ENCODE measurements at regions of chr15 and their contacts with region 1.

Region 1: GRCh38 chr15:90387537-90388461 is at the start of gene IQGAP1:
- DNase-seq: peak; percentile 99
- CTCF ChIP-seq: no peak

Region 2: GRCh38 chr15:90101969-90102890 is 285.6 kb before region 1 on chr15 and contains the start of gene IDH2:
- CTCF ChIA-PET with region 1: no interaction called
- POLR2A ChIA-PET with region 1: interaction called, 10 read pairs
- DNase-seq: peak; percentile 95
- CTCF ChIP-seq: no peak

Region 3: GRCh38 chr15:90336705-90337141 is 51.1 kb before region 1 on chr15:
- CTCF ChIA-PET with region 1: no interaction called
- POLR2A ChIA-PET with region 1: no interaction called
- DNase-seq: no peak
- CTCF ChIP-seq: no peak

Region 4: GRCh38 chr15:90400406-90401314 is 12.9 kb after region 1 on chr15:
- CTCF ChIA-PET with region 1: interaction called, 3 read pairs
- POLR2A ChIA-PET with region 1: interaction called, 10 read pairs
- DNase-seq: peak; percentile 81
- CTCF ChIP-seq: no peak

Region 5: DNA sequence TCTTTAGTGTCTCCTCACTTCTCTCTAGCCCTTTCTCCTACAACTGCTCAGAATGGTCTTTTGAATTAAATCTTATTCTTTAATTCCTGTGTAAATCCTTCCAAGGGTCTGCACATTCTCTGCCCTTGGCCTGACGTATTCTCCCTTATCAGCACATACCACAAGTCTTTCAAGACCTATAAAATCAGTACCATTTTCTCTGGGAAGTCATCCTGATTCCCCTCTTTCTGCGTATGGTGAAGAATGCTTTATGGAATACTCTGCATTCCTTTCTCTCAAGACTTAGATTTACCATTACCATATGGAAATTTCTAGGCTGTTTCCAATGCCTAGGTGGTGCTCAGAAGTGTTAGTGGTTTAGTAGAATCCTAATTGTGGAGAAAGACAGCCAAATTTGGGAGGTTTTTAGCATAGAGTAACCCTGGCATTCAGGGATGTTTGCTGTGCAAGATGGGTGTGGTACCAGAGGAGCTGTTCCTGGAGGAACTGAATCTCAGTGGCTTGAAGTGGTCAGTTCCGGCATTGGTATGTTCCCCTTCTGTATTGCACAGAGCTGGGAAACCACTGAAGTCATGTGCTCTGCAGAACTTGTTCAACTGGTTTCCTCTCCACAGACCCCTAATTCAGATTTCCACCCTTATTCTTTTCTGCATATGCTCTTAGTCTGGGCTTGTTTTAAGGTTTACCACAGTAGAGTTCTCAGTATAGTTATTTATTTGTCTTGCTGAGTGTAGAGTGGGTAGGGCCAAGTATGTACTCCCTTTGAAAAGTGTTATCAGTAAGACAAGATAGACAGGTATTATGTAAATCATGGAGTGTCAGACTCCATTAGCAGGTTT is 24.8 kb after region 1 on chr15:
- CTCF ChIA-PET with region 1: no interaction called
- POLR2A ChIA-PET with region 1: no interaction called
- DNase-seq: peak; percentile 37
- CTCF ChIP-seq: no peak

Measured in GM10248 (cell line).